GM13977 (cell line): ENCODE measurements at regions of chr1 and their contacts with region 1.

Region 1: GRCh38 chr1:39183503-39184353 is 20.8 kb upstream of the MACF1 start:
- DNase-seq: peak; percentile 26
- CTCF ChIP-seq: peak; percentile 35

Region 2: DNA sequence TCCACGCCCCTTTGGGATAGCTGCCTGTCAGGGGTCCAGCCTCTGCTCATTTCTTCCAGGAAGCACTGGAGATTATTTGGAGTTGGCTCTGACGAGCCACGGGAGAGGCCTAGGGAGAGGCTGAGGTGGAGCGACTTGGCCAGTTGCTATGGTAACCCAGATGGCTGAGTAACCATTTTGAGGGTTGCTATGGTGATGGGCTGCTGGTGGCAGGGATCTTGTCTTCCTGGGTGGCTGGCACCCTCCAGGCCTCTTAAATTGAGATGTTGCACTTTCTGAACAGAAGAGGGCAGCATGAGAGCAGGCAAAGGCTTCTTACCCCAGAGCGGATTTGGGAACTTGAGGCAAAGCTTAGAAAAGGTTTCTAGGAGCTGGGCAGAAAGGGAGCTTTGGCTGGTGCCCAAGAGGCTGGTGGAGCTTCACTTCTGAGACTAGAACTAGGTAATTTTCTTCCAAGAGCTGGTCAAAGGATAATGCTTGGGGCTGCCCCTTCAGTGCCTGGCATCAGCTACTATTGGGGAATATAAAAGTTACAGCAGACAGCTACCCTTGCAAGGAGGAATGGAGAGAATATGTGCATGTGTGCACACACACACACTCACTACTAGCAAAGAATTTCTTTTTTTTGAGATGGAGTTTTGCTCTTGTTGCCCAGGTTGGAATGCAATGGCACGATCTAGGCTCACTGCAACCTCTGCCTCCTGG is 85.0 kb before region 1 on chr1:
- in situ Hi-C with region 1: loop called (anchors 10 kb)
- DNase-seq: peak; percentile 83
- CTCF ChIP-seq: peak; percentile 85

Region 3: DNA sequence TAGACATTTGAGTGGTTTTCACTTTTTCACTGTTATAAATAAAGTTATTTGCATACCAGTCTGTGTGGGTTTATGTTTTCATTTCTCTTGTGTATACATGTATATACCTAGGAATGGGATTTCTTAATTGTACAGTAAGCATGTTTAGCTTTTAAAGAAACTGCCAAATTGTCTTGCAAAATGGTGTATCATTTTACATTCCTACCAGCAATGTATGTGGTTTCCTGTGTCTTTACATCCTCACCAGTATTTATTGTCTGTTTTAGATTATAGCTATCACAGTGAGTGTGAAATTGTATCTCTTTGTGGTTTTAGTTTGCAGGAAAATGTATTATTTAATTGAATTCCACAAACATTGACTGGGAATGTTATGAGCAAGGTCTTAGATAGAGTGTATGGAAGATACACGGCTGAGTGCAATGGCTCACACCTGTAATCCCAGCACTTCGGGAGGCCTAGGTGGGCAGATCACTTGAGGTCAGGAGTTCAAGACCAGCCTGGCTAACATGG is 78.0 kb after region 1 on chr1:
- in situ Hi-C with region 1: loop called (anchors 5 kb)
- DNase-seq: no peak
- CTCF ChIP-seq: no peak